ENCODE measurements at regions of chr17 and their contacts with region 1.

Region 1: GRCh38 chr17:5031365-5032082 is 3.7 kb downstream of the SLC52A1 start:
- DNase-seq: peak; percentile 91
- H3K4me3 ChIP-seq: peak overlapping the region; percentile 64
- H3K27ac ChIP-seq: peak overlapping the region; percentile 43
- H3K4me1 ChIP-seq: peaks cover 38% of the 10 kb centered on the region
- CTCF ChIP-seq: peak; percentile 72

Region 2: GRCh38 chr17:4986951-4987766 is 44.4 kb before region 1 on chr17 and contains the start of gene CAMTA2:
- CTCF ChIA-PET with region 1: no interaction called
- POLR2A ChIA-PET with region 1: no interaction called
- intact Hi-C with region 1: loop called (anchors 5 kb)
- DNase-seq: peak; percentile 85
- H3K4me3 ChIP-seq: peak within 1 kb of the TSS; percentile 93
- H3K27ac ChIP-seq: peak within 1 kb of the TSS; percentile 48
- H3K4me1 ChIP-seq: peaks cover 27% of the 10 kb centered on the region
- CTCF ChIP-seq: peak; percentile 89
- total RNA-seq, gene CAMTA2: 8.7 and 9.7 TPM in 2 replicates

Region 3: GRCh38 chr17:5254903-5255526 is 223.5 kb after region 1 on chr17:
- CTCF ChIA-PET with region 1: no interaction called
- POLR2A ChIA-PET with region 1: interaction called, 12 read pairs
- intact Hi-C with region 1: no loop called
- DNase-seq: peak; percentile 61
- H3K4me3 ChIP-seq: peak overlapping the region; percentile 26
- H3K27ac ChIP-seq: peak overlapping the region; percentile 48
- H3K4me1 ChIP-seq: peaks cover 20% of the 10 kb centered on the region
- CTCF ChIP-seq: no peak

Measured in OCI-LY7 (cell line).